ENCODE measurements at regions of chr22 and their contacts with region 1.

Region 1: DNA sequence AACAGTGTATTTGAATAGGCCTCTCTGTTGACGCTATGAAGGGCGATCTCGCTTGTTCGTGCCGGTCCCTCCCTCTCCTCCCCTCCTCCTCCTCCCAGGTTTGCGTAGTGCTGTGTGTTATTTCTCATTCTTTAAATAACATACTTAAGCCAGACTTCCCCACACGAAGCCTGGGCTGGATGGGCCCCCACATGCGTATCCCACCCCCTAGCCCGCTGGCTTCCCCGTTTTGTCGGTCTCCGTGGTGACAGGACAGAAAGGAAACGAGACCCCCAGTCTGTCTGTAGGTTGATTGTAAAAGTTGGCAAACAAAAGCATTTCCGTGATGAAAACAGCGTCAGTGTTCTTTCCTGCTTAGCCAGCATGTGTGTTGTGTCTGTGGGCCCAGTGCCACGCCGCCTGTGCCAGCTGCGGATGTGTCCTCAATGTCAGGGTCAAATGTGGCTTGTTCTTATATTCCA is 27.3 kb downstream of the FAM118A start:
- DNase-seq: no peak
- H3K4me3 ChIP-seq: no peak overlapping the region
- H3K27ac ChIP-seq: peak overlapping the region; percentile 32
- H3K4me1 ChIP-seq: peaks cover 29% of the 10 kb centered on the region
- H3K27me3 ChIP-seq: no peaks in the 10 kb centered on the region
- CTCF ChIP-seq: no peak
- POLR2A ChIP-seq: no peak

Region 2: DNA sequence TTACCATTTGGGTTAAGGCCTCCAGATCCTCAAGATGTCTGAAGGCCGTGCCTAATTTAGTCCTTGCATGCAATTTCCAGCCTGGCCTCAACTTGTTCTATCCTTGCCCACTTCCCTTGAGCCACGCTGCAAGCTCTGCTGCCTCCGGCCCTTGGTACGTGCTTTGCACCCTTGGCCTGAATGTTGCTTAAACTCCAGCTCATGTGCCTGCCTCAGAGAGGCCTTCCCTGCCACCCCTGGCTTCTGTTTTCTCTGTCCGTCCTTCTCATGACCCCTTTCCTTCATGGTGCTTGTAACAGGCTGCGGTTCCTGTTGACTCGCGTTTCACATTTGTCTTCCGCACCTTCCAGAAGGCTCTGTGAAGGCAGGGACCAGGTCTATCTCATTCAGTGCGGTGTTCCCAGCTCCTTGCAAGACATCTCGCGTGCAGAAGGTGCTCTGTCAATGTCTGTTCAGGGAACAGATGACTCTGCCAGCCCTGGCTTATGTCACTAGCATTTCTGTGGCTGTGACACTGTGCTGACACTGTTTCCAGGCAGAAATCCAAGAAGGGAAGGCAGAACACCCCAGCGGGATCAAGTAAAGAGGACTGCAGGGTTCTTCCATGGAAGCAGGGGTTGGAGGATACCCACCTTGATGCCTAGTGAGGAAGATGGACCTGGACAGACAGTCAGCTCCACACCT is 227.5 kb after region 1 on chr22:
- intact Hi-C with region 1: loop called (anchors 10 kb)
- DNase-seq: no peak
- H3K4me3 ChIP-seq: no peak overlapping the region
- H3K27ac ChIP-seq: no peak overlapping the region
- H3K4me1 ChIP-seq: no peaks in the 10 kb centered on the region
- H3K27me3 ChIP-seq: no peaks in the 10 kb centered on the region
- CTCF ChIP-seq: no peak
- POLR2A ChIP-seq: no peak

Measured in vagina (tissue), 2 donors.